Colonic mucosa (tissue), 4 donors: ENCODE measurements at regions of chr11 and their contacts with region 1.

Region 1: DNA sequence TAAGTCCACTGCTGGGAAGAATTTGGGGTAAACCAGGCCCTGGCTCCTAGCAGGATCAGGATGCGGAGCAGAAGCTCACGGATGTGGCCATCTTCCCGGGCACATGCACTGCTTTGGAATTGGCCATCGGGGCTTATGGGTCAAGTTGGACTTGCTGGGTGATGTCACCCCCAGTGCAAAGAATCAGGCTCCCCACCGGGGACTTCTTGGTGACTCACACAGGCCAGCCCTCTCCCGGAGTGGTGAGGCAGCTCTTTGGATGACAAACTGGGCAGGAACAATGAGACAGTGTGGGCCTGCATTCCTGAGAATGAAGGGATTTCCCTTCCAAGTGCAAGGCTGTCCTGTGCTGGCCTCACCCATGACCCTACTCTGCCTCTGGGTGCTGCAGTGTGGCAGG is 128.8 kb upstream of the ANO1 start:
- DNase-seq: no peak
- H3K4me3 ChIP-seq: no peak overlapping the region
- H3K27ac ChIP-seq: no peak overlapping the region
- H3K4me1 ChIP-seq: peaks cover 12% of the 10 kb centered on the region
- H3K27me3 ChIP-seq: no peaks in the 10 kb centered on the region
- CTCF ChIP-seq: no peak

Region 2: GRCh38 chr11:70073871-70074371 is 124.6 kb after region 1 on chr11:
- intact Hi-C with region 1: loop called (anchors 10 kb)
- DNase-seq: no peak
- H3K4me3 ChIP-seq: no peak overlapping the region
- H3K27ac ChIP-seq: no peak overlapping the region
- H3K4me1 ChIP-seq: no peaks in the 10 kb centered on the region
- H3K27me3 ChIP-seq: peaks cover 17% of the 10 kb centered on the region
- CTCF ChIP-seq: no peak

Region 3: GRCh38 chr11:70437111-70437784 is 487.9 kb after region 1 on chr11:
- intact Hi-C with region 1: no loop called
- DNase-seq: no peak
- H3K4me3 ChIP-seq: no peak overlapping the region
- H3K27ac ChIP-seq: no peak overlapping the region
- H3K4me1 ChIP-seq: no peaks in the 10 kb centered on the region
- H3K27me3 ChIP-seq: no peaks in the 10 kb centered on the region
- CTCF ChIP-seq: no peak